H1 (cell line): ENCODE measurements at regions of chr6 and their contacts with region 1.

Region 1: GRCh38 chr6:10478187-10479040 is 42.7 kb upstream of the GCNT2 start:
- DNase-seq: no peak
- H3K4me3 ChIP-seq: no peak overlapping the region
- H3K27ac ChIP-seq: no peak overlapping the region
- H3K4me1 ChIP-seq: no peaks in the 10 kb centered on the region
- H3K27me3 ChIP-seq: no peaks in the 10 kb centered on the region
- CTCF ChIP-seq: peak in 2 of 3 experiments; percentile 46 to 64; a peak in 2 of 4 replicates
- EP300 ChIP-seq: no peak
- POLR2A ChIP-seq: no peak
- RAD21 ChIP-seq: peak; percentile 86 to 89

Region 2: GRCh38 chr6:10465629-10466504 is 12.5 kb before region 1 on chr6:
- CTCF ChIA-PET with region 1: interaction called, 23 read pairs
- POLR2A ChIA-PET with region 1: no interaction called
- DNase-seq: peak in 1 of 2 experiments; percentile 85
- H3K4me3 ChIP-seq: no peak overlapping the region
- H3K27ac ChIP-seq: no peak overlapping the region
- H3K4me1 ChIP-seq: peaks cover 0 to 5% (median 4%) of the 10 kb centered on the region in 4 experiments; a peak in 5 of 7 replicates
- H3K27me3 ChIP-seq: no peaks in the 10 kb centered on the region
- CTCF ChIP-seq: peak; percentile 64 to 77 (median 71)
- EP300 ChIP-seq: no peak
- POLR2A ChIP-seq: no peak
- RAD21 ChIP-seq: peak; percentile 51 to 56

Region 3: GRCh38 chr6:10510592-10511367 is 32.4 kb after region 1 on chr6:
- CTCF ChIA-PET with region 1: interaction called, 66 read pairs
- POLR2A ChIA-PET with region 1: no interaction called
- DNase-seq: peak in 1 of 2 experiments; percentile 62
- H3K4me3 ChIP-seq: no peak overlapping the region
- H3K27ac ChIP-seq: no peak overlapping the region
- H3K4me1 ChIP-seq: peaks cover 0 to 3% (median 0%) of the 10 kb centered on the region in 4 experiments; a peak in 2 of 7 replicates
- H3K27me3 ChIP-seq: no peaks in the 10 kb centered on the region
- CTCF ChIP-seq: peak; percentile 77 to 91 (median 88)
- EP300 ChIP-seq: 0 out of 3 replicates have a peak, but pooled peaks of 1 of the 2 experiments have one; percentile 53
- POLR2A ChIP-seq: no peak
- RAD21 ChIP-seq: peak; percentile 98

Region 4: DNA sequence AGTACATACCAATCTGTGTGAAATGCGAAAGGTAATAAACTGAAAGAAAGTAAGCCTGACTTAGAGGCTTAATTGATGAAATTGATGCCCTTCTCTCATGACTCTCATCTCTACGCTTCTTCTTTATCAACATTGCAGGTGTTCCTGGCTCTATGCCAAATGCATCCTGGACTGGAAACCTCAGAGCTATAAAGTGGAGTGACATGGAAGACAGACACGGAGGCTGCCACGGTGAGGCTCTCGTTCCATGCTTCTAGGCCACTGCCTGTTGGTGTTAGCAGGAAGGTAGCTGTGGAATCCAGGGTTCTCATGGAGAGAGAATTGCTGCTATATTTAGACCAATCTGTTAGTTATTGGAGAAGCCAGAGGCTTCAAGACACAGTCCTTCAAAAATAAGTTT is 142.8 kb after region 1 on chr6:
- CTCF ChIA-PET with region 1: interaction called, 11 read pairs
- POLR2A ChIA-PET with region 1: no interaction called
- DNase-seq: no peak
- H3K4me3 ChIP-seq: no peak overlapping the region
- H3K27ac ChIP-seq: no peak overlapping the region
- H3K4me1 ChIP-seq: no peaks in the 10 kb centered on the region
- H3K27me3 ChIP-seq: no peaks in the 10 kb centered on the region
- CTCF ChIP-seq: no peak
- EP300 ChIP-seq: no peak
- POLR2A ChIP-seq: no peak
- RAD21 ChIP-seq: no peak

Region 5: DNA sequence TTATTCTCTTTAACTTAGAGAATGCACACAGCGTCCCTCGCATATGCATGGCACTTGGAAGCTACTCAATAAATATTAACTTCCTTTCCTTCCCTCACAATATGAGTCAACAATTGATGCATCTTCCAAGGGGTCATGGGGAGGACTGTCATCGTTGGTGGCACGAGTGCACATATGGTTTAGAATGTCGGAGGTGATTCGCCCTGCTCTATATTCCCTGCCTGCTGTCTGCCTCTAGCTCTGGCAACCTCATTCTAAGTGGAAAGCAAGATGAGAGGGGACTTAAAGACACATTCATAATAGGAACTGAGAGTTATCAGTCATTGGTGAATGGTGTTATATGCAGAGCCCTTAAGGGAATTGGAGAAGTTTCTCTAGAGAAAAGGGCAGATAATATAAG is 315.3 kb after region 1 on chr6:
- CTCF ChIA-PET with region 1: interaction called, 14 read pairs
- POLR2A ChIA-PET with region 1: no interaction called
- DNase-seq: no peak
- H3K4me3 ChIP-seq: no peak overlapping the region
- H3K27ac ChIP-seq: no peak overlapping the region
- H3K4me1 ChIP-seq: no peaks in the 10 kb centered on the region
- H3K27me3 ChIP-seq: no peaks in the 10 kb centered on the region
- CTCF ChIP-seq: no peak
- EP300 ChIP-seq: no peak
- POLR2A ChIP-seq: no peak
- RAD21 ChIP-seq: no peak

Region 6: DNA sequence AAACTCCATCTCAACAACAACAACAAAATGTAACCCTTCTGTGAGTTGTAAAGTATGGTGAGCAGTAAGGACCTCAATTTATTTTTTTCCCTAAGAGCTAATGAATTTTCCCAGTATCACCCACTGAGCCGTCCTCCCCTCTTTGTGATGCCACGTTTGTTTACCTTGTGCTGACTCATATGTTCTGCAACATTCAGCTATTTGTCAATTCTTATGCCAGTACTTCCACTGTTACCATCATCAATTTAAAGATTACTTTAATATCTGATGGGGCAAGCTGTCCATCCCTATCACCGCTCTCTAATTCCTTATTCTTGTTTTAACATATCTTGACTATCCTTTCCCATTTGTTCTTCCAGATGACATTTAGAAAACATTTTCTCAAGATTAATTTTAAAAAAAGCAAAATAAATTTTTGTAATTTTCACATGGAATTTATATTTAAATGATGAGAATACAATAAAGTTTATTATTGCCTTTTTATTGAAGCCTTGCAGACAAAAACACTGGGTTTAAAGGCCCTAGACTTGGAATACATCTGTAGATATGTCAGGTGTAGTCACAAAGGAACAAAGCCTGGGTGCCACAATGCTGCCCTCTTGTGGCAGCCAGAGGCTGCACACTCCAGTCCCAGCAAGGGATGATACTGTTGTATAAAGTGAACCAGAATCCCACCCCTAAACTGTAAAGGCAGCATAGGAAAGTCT is 322.6 kb after region 1 on chr6:
- CTCF ChIA-PET with region 1: interaction called, 38 read pairs
- POLR2A ChIA-PET with region 1: no interaction called
- DNase-seq: peak; percentile 15 to 78
- H3K4me3 ChIP-seq: no peak overlapping the region
- H3K27ac ChIP-seq: no peak overlapping the region
- H3K4me1 ChIP-seq: no peaks in the 10 kb centered on the region
- H3K27me3 ChIP-seq: no peaks in the 10 kb centered on the region
- CTCF ChIP-seq: peak; percentile 84 to 97 (median 92)
- EP300 ChIP-seq: no peak
- POLR2A ChIP-seq: no peak
- RAD21 ChIP-seq: peak; percentile 90 to 91